HEK293 (cell line): ENCODE measurements at regions of chr17 and their contacts with region 1.

Region 1: DNA sequence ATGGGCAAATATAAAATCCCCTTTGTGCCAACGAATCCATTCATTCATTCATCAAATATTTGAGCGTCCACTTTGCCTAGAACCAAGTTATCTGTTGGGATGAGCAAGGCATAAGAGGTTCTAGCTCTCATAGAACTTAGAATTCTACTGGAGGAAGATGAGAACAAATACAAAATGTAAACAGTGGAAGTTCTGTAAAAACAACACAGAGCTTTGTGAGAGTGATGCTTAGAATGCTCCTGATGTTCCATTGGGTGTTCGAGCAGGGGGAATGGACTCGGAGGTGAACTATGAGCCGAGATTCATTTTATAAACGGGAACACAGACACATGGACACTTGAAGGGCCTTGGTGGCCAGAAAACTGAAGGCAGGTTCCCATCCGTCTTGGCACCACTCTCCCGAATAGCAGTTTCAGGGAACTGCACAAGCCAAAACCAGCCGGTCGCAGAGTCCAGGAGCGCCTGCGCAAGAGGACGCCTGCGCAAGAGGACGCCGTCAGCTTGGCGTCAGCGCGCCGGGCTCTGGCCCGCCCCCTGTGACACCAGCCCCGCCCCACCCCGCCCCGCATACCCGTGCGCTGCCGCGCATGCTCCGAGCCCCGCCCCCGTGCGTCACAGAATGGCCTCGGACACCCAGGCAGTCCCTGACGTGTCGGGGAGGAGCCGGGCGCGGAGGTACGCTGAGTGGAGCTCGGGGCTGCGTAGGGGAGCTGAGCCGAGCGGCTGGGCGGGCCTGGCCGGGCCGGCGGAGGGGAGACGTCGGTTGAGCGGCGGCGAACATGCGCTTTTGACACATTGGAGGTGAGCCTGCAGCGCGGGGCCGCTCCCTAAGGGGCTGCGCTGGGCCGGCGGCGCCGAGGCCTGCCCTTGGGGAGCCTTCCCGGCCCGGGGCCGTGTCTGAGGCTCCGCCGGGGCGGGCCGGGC is at the start of gene NDEL1:
- H3K4me3 ChIP-seq: peak within 1 kb of the TSS; percentile 90
- H3K27ac ChIP-seq: peak within 1 kb of the TSS; percentile 91
- H3K4me1 ChIP-seq: no peaks in the 10 kb centered on the region
- CTCF ChIP-seq: no peak

Region 2: DNA sequence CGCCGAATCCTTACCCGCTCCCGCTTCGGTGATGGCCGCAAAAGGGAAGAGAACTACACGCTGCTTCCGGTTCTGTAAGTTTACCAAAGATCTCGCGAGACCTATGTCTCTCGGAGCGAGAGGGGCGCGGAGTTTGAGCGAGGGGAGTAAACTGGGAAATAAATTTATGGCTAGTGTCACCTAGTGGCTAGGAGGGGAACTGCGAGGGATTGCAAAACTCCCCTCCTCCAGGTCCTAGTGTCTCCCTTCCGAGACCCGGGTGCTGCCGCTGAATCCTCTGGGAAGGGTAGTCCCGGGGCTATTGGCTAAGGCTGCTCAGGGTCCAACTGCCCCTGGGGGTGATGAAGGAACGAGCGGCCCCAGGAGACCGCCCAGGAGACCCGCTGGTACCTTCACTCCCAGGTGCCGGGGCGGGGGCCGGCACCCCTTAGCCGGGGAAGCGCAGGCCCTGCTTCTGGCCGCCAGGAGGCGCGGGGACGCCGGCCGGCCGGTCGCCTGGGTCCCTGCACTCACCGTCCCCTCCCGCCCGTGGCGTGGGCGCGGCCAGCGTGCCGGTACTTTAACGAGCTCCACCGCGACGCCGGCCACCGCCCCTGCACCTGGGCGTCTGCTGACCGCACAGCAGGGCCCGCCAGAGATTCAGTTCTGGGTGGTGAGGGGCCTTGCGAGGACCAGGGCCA is 52.2 kb before region 1 on chr17 and contains the start of gene RPL26:
- CTCF ChIA-PET with region 1: interaction called, 3 read pairs
- POLR2A ChIA-PET with region 1: interaction called, 24 read pairs
- H3K4me3 ChIP-seq: peak within 1 kb of the TSS; percentile 90
- H3K27ac ChIP-seq: peak within 1 kb of the TSS; percentile 97
- H3K4me1 ChIP-seq: peaks cover 13% of the 10 kb centered on the region
- CTCF ChIP-seq: peak; percentile 98

Region 3: DNA sequence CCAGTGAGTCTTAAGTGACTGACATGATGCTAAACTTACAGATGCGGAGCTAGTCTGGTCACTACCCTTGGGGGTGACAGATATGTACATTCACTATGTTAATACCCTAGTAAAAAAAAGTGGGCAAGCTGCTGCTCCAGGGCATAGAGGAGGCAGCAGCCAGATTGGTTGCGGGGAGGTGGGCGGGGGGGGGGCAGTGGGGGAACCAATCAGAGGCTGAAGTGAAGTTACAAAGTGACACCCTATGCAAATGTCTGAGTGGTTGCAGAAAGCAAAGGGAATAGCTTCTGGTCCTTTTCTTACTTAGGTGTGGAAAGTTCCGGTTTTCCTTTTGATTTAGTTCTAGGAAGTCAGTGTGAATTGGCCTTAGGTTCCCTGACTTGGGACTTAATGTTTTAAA is 12.3 kb after region 1 on chr17:
- CTCF ChIA-PET with region 1: interaction called, 4 read pairs
- POLR2A ChIA-PET with region 1: interaction called, 12 read pairs
- H3K4me3 ChIP-seq: no peak overlapping the region
- H3K27ac ChIP-seq: no peak overlapping the region
- H3K4me1 ChIP-seq: no peaks in the 10 kb centered on the region
- CTCF ChIP-seq: no peak

Region 4: DNA sequence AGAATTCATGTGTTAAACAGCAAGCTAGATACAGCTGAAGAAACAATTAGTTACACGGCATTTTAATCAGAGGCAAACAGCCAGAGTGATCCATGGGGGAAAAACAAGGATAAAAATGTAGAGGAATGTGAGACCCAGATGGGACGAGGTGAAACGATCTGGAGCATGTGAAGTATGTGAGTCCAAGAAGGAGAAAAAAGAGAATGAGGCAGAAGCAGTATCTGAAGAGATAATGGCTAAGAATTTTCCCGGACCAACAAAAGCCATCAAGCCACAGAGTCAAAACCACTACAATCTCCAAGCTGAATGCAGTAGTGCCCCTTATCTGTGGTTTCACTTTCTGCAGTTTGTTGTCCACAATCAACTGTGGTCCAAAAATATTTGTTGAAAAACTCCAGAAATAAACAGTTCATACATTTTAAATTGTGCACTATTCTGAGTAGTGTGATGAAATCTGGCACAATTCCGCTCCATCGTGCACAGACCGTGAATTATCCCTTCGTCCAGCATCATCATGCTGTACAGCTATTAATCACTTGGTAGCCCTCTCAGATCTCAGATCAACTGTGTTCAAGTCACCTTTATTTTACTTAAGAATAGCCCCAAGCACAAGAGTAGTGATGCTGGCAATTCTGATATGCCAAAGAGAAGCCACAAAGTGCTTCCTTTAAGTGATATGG is 176.3 kb after region 1 on chr17:
- CTCF ChIA-PET with region 1: no interaction called
- POLR2A ChIA-PET with region 1: no interaction called
- H3K4me3 ChIP-seq: no peak overlapping the region
- H3K27ac ChIP-seq: no peak overlapping the region
- H3K4me1 ChIP-seq: peaks cover 24% of the 10 kb centered on the region
- CTCF ChIP-seq: no peak

Region 5: DNA sequence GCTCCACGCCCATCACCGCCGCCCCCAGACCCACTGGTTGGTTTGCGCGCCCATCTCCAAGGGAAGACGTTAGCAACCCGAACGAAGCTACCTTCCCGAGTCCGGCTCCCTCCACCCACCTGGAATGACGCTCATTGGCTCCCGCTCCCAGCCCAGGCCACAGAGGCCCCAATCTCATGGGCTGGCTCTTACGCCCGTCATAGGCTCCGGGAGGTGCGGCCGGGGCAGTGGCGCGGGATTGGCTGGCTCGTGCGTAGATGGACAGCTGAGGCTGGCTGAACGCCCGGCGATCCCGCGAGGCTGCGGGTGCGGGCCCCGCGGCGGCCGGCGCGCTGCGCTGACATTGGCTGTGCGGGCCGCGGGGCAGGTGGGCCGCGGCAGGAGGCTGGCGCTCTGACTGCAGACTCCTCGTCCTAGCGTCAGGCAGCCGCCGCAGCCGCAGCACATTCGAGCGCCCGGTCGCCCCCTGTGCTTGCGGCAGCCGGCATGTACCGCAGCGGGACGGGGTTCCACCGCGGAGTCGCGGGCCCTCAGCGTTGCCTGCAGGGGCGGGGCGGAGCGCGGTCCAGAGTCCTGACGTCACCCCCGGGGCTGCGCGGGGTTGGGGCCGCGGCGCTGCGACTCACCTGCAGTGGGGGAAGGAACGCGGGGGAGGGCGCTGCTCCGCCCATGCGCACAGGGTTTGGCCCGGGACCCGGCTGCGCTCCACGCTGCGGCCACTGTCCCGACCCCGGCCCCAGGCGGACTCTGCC is 195.5 kb after region 1 on chr17:
- CTCF ChIA-PET with region 1: no interaction called
- POLR2A ChIA-PET with region 1: interaction called, 18 read pairs
- H3K4me3 ChIP-seq: peak overlapping the region; percentile 92
- H3K27ac ChIP-seq: peak overlapping the region; percentile 90
- H3K4me1 ChIP-seq: peaks cover 22% of the 10 kb centered on the region
- CTCF ChIP-seq: peak; percentile 98